ENCODE measurements at regions of chr5 and their contacts with region 1.

Region 1: GRCh38 chr5:172697123-172698121 is 56.4 kb downstream of the NEURL1B start:
- DNase-seq: peak; percentile 89
- H3K4me3 Mint-ChIP-seq: peak overlapping the region; percentile 89
- H3K27ac Mint-ChIP-seq: peak overlapping the region; percentile 86
- H3K4me1 Mint-ChIP-seq: peaks cover 25% of the 10 kb centered on the region
- H3K27me3 Mint-ChIP-seq: peaks cover 20% of the 10 kb centered on the region

Region 2: GRCh38 chr5:172405226-172406107 is 292.0 kb before region 1 on chr5:
- CTCF ChIA-PET with region 1: no interaction called
- POLR2A ChIA-PET with region 1: no interaction called
- DNase-seq: no peak
- H3K4me3 Mint-ChIP-seq: no peak overlapping the region
- H3K27ac Mint-ChIP-seq: no peak overlapping the region
- H3K4me1 Mint-ChIP-seq: peaks cover 6% of the 10 kb centered on the region
- H3K27me3 Mint-ChIP-seq: peaks cover 36% of the 10 kb centered on the region

Region 3: DNA sequence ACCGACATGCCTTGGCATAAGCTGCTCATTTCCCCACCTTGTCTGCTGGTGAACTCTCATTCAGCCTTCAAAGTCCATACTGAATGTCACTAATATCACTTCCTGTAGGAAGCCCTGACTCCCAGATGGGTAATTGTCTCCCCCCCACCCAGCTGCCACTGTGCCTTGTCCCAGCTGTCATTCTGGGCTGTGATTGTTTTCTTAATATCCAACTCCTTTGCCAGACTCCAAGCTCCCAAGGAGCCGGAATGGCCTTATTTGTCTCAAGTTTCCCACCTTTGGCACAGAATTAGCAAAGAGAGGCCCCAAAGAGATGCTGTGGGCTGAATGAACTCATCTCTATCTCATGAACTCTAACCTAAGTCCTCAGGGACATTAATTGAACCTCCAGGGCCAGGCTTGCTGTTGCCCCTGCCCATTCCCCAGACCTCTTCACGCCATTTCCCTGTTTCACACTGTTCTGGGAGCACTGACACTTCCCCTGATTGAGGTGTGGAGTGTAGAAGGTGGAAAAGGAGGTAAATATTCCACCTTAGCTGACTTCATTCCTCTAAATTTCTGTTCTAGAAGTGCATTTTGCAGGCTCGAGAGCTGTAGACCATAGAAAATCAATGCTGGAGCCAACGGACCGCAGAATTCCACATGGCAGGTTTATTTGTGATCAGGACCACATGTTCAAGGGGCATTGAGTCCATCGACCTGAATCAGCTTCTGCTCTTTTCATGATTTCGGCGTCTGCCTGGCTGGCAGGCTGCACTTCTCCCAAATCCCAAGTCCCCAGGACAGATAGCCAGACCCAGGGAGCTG is 238.2 kb before region 1 on chr5:
- CTCF ChIA-PET with region 1: interaction called, 16 read pairs
- POLR2A ChIA-PET with region 1: no interaction called
- DNase-seq: no peak
- H3K4me3 Mint-ChIP-seq: no peak overlapping the region
- H3K27ac Mint-ChIP-seq: no peak overlapping the region
- H3K4me1 Mint-ChIP-seq: peaks cover 14% of the 10 kb centered on the region
- H3K27me3 Mint-ChIP-seq: peaks cover 29% of the 10 kb centered on the region

Region 4: GRCh38 chr5:172479044-172479783 is 218.2 kb before region 1 on chr5:
- CTCF ChIA-PET with region 1: interaction called, 19 read pairs
- POLR2A ChIA-PET with region 1: interaction called, 3 read pairs
- DNase-seq: peak; percentile 61
- H3K4me3 Mint-ChIP-seq: no peak overlapping the region
- H3K27ac Mint-ChIP-seq: no peak overlapping the region
- H3K4me1 Mint-ChIP-seq: no peaks in the 10 kb centered on the region
- H3K27me3 Mint-ChIP-seq: peaks cover 4% of the 10 kb centered on the region

Region 5: GRCh38 chr5:172666251-172666650 is 31.2 kb before region 1 on chr5:
- CTCF ChIA-PET with region 1: no interaction called
- POLR2A ChIA-PET with region 1: no interaction called
- DNase-seq: no peak
- H3K4me3 Mint-ChIP-seq: no peak overlapping the region
- H3K27ac Mint-ChIP-seq: no peak overlapping the region
- H3K4me1 Mint-ChIP-seq: no peaks in the 10 kb centered on the region
- H3K27me3 Mint-ChIP-seq: peaks cover 4% of the 10 kb centered on the region

Region 6: DNA sequence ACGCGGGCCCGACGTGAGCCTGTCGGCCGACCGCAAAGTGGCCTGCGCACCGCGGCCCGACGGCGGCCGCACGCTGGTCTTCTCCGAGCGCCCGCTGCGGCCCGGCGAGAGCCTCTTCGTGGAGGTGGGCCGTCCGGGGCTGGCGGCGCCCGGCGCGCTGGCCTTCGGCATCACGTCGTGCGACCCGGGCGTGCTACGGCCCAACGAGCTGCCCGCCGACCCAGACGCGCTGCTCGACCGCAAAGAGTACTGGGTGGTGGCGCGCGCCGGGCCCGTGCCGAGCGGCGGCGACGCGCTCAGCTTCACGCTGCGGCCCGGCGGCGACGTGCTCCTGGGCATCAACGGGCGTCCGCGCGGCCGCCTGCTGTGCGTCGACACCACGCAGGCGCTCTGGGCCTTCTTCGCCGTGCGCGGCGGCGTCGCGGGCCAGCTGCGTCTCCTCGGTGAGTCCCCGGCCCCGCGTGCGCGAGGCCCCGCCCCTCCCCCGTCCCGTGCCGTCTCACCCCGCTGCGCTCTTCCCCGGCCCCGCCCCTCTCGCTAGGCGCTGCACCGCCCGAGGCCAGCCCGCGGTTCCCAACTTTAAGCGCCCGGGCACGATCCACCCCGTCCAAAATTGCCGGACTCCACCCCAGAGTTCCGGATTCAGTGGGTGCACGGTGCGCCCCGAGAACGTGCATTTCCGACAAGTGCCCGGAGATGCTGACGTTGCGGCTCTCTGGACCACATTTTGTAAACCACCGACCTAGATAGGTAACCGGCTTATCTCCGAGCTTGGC is 13.5 kb before region 1 on chr5:
- CTCF ChIA-PET with region 1: interaction called, 10 read pairs
- POLR2A ChIA-PET with region 1: interaction called, 7 read pairs
- DNase-seq: peak; percentile 56
- H3K4me3 Mint-ChIP-seq: peak overlapping the region; percentile 46
- H3K27ac Mint-ChIP-seq: no peak overlapping the region
- H3K4me1 Mint-ChIP-seq: peaks cover 22% of the 10 kb centered on the region
- H3K27me3 Mint-ChIP-seq: peaks cover 22% of the 10 kb centered on the region

Region 7: DNA sequence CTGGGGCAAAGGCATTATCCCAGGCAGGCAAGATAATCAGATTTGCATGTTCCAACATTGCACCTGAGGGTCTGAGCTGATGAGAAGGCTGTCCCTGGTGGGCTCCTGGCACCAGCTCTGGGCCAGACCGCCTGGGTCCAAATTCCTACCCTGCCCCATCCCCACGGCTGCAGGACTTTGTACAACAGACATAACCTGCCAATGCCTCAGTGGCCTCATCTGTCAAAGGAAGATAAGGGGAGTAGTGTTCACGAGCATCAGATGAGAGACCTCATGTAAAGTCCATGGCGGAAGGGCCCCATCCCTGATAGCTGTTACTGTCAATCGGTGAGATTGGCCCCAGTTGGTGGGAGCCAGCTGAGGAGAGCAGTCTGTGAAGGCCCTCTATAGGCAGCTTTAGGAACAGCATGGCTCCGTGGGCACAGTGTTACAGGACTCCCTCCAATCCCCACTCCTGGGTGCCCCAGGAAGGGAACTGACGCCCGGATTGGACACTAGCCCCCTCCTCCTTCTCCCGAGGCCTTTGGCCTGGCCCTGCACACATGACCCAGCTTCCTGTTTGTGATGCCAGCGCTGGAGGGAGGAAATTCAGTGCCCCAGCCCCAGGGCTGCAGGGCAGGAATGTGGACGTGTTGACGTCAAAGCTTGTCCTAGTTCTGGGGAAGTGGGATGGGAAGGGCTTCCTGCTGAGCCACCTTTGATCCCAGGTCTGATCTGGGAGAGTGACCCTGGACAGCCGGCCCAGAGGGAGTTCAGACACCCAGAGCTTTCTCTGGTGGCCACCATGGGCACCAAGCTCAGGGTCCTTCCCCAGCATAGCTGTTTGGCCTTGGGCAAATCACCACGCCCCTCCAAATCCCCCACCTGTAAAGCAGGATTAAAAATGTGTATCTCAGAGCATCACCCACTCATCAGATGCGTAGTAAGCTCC is 17.3 kb after region 1 on chr5:
- CTCF ChIA-PET with region 1: interaction called, 16 read pairs
- POLR2A ChIA-PET with region 1: no interaction called
- DNase-seq: peak; percentile 66
- H3K4me3 Mint-ChIP-seq: no peak overlapping the region
- H3K27ac Mint-ChIP-seq: no peak overlapping the region
- H3K4me1 Mint-ChIP-seq: peaks cover 6% of the 10 kb centered on the region
- H3K27me3 Mint-ChIP-seq: peaks cover 10% of the 10 kb centered on the region